Transverse colon (tissue), 4 donors: ENCODE measurements at regions of chr18 and their contacts with region 1.

Region 1: DNA sequence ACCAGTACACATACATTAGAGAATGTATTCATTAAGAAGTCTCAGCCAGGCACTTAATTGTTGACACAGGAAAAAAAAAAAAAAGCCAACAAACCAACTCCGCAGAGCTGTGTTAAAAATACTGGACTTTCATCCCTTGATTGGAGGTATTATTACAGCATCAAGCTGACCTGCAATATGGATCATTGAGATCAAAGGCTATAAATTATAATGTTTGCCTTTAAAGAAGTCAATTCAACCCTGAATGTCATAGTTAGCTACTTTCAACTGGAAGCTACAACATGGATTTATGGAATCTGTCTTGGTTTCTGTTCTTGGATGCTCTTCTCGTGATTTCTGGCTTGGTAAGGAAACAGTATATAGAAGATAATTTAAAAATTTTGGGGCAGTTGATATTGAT is at the start of gene MEP1B:
- DNase-seq: no peak
- H3K4me3 ChIP-seq: no peak within 1 kb of the TSS
- H3K27ac ChIP-seq: peak within 1 kb of the TSS in 1 of 4 donors; percentile 25
- H3K4me1 ChIP-seq: peaks cover 0 to 6% (median 0%) of the 10 kb centered on the region in 4 donors
- H3K27me3 ChIP-seq: no peaks in the 10 kb centered on the region
- CTCF ChIP-seq: no peak
- EP300 ChIP-seq: no peak
- POLR2A ChIP-seq: no peak
- total RNA-seq, gene MEP1B: 2.0 to 32.4 (median 19.9) TPM

Region 2: DNA sequence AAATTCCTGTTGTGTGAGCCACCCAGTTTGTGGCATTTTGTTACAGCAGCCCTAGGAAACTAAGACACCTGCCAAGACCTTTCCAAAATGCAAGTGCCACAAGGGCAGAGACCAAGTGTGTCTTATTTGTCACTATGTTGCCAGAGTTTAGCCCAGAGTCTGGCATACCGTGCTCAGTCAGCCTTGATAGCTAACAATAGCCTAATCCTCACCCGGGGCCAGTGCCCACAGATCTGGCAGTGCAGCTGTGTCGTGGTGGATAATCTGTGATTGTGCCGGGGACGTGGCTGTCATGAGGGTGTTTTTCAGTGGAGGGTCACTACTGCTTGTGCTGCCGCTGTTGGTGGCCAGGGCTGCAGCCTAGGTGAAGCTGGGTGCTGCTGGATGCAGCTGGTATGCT is 53.6 kb after region 1 on chr18:
- in situ Hi-C with region 1: loop called in 1 of 4 experiments (anchors 10 kb)
- intact Hi-C with region 1: no loop called
- DNase-seq: no peak
- H3K4me3 ChIP-seq: no peak overlapping the region
- H3K27ac ChIP-seq: no peak overlapping the region
- H3K4me1 ChIP-seq: no peaks in the 10 kb centered on the region
- H3K27me3 ChIP-seq: no peaks in the 10 kb centered on the region
- CTCF ChIP-seq: no peak
- EP300 ChIP-seq: no peak
- POLR2A ChIP-seq: no peak